GM12878 (cell line): ENCODE measurements at regions of chr10 and their contacts with region 1.

Region 1: DNA sequence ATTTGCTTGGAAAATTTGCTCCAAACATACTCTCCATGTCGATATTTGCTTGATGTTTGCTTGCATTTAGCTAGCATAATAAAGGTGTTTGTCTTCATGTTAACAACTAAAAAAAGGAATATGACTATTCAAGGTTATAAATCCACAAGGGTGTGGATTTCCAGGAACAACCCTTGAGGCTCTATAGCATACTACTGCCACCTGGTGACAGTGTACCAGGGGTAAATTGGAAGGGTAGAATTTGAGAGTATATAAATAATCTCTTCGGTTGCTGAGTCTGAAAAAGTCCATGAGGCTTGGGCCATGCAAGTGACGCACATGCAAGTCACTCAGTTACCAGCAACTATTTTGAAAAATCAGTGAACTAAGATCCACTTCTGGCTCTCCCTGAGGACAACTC is 68.4 kb downstream of the SLIT1 start:
- DNase-seq: no peak
- ATAC-seq: peak; percentile 65
- H3K4me3 ChIP-seq: no peak overlapping the region
- H3K27ac ChIP-seq: no peak overlapping the region
- H3K4me1 ChIP-seq: no peaks in the 10 kb centered on the region
- H3K27me3 ChIP-seq: no peaks in the 10 kb centered on the region; a peak in 2 of 4 replicates
- CTCF ChIP-seq: peak in 2 of 3 experiments; percentile 25 to 56; a peak in 3 of 6 replicates
- EP300 ChIP-seq: no peak
- POLR2A ChIP-seq: no peak
- RAD21 ChIP-seq: peak; percentile 47

Region 2: GRCh38 chr10:97081621-97082235 is 35.6 kb before region 1 on chr10:
- CTCF ChIA-PET with region 1: interaction called, 43 read pairs
- POLR2A ChIA-PET with region 1: no interaction called
- RAD21 ChIA-PET with region 1: interaction called, 11 read pairs
- SMC1A ChIA-PET with region 1: interaction called, 10 read pairs
- in situ Hi-C with region 1: no loop called
- intact Hi-C with region 1: no loop called
- DNase-seq: no peak
- ATAC-seq: peak; percentile 93
- H3K4me3 ChIP-seq: no peak overlapping the region
- H3K27ac ChIP-seq: no peak overlapping the region
- H3K4me1 ChIP-seq: no peaks in the 10 kb centered on the region
- H3K27me3 ChIP-seq: no peaks in the 10 kb centered on the region; a peak in 1 of 4 replicates
- CTCF ChIP-seq: peak; percentile 88 to 90 (median 90)
- EP300 ChIP-seq: no peak
- POLR2A ChIP-seq: no peak
- RAD21 ChIP-seq: peak; percentile 68